ENCODE measurements at regions of chr4 and their contacts with region 1.

Region 1: DNA sequence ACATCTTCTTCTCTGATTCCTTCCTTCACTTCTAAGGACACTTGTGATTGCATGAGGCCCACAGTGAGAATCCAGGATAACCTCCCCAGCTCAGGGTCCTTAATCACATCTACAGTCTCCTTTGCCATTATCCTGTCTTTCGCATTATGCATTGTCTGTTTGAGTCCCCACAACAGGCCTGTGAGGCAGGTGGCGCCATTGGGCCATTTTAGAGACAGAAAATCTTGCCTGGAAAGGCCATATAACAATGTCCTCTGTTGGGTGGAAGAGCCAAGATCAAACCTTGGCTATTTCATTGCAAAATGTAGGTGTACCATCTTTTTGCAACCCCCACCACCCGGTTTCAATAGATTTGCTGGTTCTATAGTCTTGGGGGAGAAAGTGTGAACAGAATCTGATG is 11.8 kb upstream of the DCUN1D4 start:
- DNase-seq: no peak
- H3K4me3 ChIP-seq: no peak overlapping the region
- CTCF ChIP-seq: peak; percentile 76

Region 2: GRCh38 chr4:51842554-51843308 is 11.6 kb after region 1 on chr4 and contains the start of gene DCUN1D4:
- CTCF ChIA-PET with region 1: interaction called, 26 read pairs
- POLR2A ChIA-PET with region 1: no interaction called
- DNase-seq: peak; percentile 98
- H3K4me3 ChIP-seq: peak within 1 kb of the TSS; percentile 77
- CTCF ChIP-seq: peak; percentile 52

Region 3: DNA sequence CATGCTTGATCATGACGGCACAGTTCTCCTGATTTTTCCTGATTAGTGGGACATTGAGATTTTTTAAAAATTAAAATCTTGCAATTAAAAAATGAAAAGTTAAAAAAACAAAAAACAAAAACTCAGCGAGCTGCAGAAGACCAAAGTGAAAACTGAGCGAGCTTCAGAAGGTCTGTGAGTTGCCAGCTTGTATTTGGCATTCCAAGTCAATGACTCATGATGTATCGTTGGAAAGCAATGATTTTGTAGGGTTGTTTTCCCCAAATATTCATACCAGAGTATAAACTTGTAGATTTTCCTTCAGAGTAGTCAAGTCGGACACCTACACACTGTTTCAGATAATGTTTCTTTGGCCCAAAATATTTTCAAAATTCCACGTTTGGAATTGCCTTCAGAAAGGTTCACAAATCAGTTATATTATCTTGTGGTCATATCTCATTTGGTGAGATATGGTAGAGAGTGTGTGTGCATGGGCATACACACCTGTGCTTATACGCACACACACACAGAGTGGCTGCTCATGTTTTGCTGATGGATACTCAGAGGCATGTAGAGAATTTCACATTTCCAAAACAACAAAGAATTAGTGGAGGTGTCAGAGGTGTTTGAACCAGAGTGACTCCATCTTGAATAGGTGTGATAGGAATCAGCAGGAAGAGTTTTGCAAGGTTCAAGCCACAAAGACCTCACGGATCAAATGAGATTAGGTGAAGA is 112.2 kb after region 1 on chr4:
- CTCF ChIA-PET with region 1: no interaction called
- POLR2A ChIA-PET with region 1: no interaction called
- DNase-seq: no peak
- H3K4me3 ChIP-seq: no peak overlapping the region
- CTCF ChIP-seq: no peak

Region 4: DNA sequence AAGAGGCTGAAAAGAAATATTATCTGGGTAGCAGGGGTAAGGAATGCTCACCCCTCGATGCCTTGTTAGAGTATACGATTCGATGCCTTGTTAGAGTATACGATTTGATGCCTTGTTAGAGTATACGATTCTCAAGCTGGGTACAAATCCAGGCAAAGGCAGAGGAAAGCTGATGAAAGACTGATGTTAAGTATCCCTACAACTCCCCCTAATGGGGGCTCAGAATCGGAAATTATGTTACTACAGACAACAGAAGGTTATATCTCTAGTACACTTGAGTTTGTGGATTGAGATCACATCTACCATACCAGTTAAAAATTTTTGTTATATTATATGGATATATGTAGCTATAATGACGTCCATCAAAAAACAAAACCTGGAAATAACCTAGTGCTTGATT is 184.2 kb after region 1 on chr4:
- CTCF ChIA-PET with region 1: interaction called, 12 read pairs
- POLR2A ChIA-PET with region 1: no interaction called
- DNase-seq: no peak
- H3K4me3 ChIP-seq: no peak overlapping the region
- CTCF ChIP-seq: no peak

Region 5: DNA sequence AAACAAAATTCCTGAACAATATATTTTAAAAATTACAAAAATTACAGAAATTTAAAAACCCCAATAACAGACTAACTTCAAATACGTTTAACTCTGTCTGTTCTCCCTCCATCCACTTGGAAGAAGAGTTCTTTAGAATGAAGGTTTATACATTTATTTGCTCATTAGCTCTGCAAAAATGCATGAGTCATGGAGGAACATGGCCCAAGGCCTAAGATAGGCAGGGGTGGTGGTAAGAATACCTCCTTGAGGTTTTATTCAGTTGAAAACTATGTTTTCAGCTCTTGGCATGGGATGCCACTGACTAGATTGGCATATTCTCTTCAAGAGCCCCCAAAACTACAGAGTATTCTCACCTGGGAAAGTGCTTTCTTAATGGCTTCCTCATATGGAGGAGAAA is 197.8 kb after region 1 on chr4:
- CTCF ChIA-PET with region 1: interaction called, 32 read pairs
- POLR2A ChIA-PET with region 1: no interaction called
- DNase-seq: peak; percentile 41
- H3K4me3 ChIP-seq: no peak overlapping the region
- CTCF ChIP-seq: no peak

Region 6: GRCh38 chr4:52545099-52546069 is 714.3 kb after region 1 on chr4:
- CTCF ChIA-PET with region 1: no interaction called
- POLR2A ChIA-PET with region 1: no interaction called
- DNase-seq: no peak
- H3K4me3 ChIP-seq: no peak overlapping the region
- CTCF ChIP-seq: peak; percentile 96